WTC11 (cell line): ENCODE measurements at regions of chr5 and their contacts with region 1.

Region 1: DNA sequence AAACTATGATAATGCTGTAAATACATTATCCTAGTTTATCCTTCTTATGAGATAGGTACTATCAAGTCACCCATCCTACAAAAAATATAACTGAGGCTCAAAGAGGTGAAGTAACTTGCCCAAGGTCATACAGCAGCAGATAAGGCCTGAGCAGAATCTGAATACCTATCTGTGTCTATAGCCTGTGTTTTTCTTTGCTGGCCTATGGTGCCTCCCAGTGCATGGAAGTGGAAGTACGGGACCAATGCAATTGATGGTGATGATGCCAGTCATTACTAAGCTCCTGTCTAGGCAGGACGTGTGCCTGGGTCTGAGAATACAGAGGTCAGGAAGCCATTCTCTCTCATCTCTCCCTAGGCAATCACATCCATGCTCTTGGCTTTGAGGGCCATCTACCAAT is 67.8 kb downstream of the FAT2 start:
- DNase-seq: peak; percentile 62
- ATAC-seq: peak; percentile 97
- H3K4me3 Mint-ChIP-seq: no peak overlapping the region
- H3K27ac Mint-ChIP-seq: no peak overlapping the region
- H3K4me1 Mint-ChIP-seq: no peaks in the 10 kb centered on the region
- H3K27me3 Mint-ChIP-seq: no peaks in the 10 kb centered on the region
- CTCF ChIP-seq: peak; percentile 47; the same call in 1 of the 2 replicates

Region 2: DNA sequence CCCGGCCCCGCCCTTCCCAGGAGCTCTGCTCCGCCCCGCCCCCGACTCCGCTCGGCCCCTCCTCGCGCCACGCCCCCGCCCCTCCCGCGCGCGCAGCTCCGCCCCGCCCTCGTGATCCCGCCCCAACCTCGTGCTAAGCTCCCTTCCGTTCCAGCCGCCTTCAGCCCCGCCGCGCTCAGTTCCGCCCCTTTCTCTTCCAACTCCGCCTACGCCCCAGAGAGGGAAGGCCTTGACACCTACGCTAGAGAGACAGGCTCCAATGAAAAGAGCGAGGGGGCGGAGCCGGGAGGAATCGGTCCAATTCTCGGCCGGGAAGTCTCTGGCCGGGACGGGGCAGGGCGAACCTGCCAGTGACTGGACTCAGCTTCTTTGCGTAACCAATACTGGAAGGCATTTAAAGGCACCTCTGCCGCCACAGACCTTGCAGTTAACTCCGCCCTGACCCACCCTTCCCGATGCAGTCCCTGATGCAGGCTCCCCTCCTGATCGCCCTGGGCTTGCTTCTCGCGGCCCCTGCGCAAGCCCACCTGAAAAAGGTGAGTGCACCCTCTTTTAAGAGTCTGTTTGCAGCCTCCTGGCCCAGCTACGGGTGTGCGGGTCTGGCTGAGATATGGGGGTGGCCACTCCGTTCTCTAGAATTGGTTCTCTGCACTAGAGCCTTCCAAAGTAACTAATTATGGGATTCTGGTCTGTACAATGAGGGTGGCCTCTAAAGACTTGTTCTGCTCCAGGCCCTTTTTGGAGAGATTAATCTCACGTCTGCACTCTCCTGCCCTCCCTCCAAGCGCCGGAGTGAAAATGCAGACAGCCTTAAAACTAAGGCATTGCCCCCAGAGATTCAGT is 270.4 kb before region 1 on chr5 and contains the start of gene GM2A:
- CTCF ChIA-PET with region 1: interaction called, 12 read pairs
- POLR2A ChIA-PET with region 1: no interaction called
- DNase-seq: peak; percentile 100
- ATAC-seq: peak; percentile 96
- H3K4me3 Mint-ChIP-seq: peak within 1 kb of the TSS; percentile 90
- H3K27ac Mint-ChIP-seq: peak within 1 kb of the TSS; percentile 92
- H3K4me1 Mint-ChIP-seq: peaks cover 35% of the 10 kb centered on the region
- H3K27me3 Mint-ChIP-seq: peaks cover 6% of the 10 kb centered on the region
- CTCF ChIP-seq: no peak
- total RNA-seq, gene GM2A: 33.1 to 36.2 TPM (median 33.2 TPM) in 3 replicates

Region 3: DNA sequence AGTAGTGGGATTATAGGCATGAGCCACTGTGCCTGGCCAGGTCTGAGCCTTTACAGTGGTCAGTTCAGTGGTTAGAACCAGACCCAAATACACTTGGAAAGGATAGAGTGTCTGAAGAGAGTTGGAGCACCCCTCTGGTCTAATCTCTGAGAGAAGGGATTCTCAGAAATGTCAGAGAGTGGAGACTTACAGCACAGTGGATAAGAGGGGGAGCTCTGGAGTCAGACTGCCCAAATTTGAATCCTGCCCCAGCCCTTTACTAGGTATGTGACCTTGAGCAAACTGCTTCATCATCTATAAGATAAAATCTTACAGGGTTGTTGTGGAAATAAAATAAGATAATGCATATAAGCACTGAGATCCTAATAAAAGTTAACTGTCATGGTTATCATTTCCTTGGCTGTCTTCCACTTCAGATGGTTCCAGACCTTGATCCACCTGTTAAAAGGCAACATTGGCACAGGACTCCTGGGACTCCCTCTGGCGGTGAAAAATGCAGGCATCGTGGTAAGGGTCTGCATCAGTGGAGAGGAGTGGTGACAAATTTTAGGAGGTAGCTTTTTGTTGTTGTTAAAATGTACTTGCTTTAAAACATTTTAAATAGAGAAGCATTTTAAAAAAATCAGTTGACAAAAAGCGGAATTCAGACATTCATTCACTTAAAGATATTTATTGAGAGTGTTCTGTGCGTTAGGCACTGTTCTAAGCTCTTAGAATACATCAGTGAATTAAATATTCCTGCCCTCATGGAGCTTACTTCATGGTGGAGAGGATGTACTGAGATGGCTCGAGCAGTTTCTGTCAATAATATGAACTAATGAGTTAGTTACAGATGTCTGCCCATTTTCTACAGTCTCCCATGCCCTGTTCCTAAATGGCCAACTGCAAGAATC is 60.0 kb before region 1 on chr5:
- CTCF ChIA-PET with region 1: interaction called, 13 read pairs
- POLR2A ChIA-PET with region 1: no interaction called
- DNase-seq: peak; percentile 72
- ATAC-seq: peak; percentile 93
- H3K4me3 Mint-ChIP-seq: no peak overlapping the region
- H3K27ac Mint-ChIP-seq: no peak overlapping the region
- H3K4me1 Mint-ChIP-seq: no peaks in the 10 kb centered on the region
- H3K27me3 Mint-ChIP-seq: no peaks in the 10 kb centered on the region
- CTCF ChIP-seq: peak; percentile 66; the same call in 1 of the 2 replicates

Region 4: DNA sequence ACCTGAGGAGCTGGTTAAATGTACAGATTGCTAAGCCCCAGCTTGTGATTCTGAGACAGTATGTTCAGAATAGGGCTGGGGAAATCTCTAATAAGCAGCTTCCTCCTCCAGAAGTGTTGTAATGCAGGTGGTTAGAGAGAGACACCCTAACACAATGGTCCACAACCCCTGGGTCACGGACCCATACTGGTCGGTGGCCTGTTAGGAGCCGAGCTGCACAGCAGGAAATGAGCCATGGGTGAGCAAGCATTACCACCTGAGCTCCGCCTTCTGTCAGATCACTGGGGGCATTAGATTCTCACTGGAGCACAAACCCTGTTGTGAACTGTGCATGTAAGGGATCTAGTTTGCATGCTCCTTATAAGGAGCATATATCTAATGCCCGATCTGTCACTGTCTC is 14.1 kb before region 1 on chr5:
- CTCF ChIA-PET with region 1: interaction called, 10 read pairs
- POLR2A ChIA-PET with region 1: no interaction called
- DNase-seq: no peak
- ATAC-seq: no peak
- H3K4me3 Mint-ChIP-seq: no peak overlapping the region
- H3K27ac Mint-ChIP-seq: no peak overlapping the region
- H3K4me1 Mint-ChIP-seq: no peaks in the 10 kb centered on the region
- H3K27me3 Mint-ChIP-seq: no peaks in the 10 kb centered on the region
- CTCF ChIP-seq: no peak

Region 5: GRCh38 chr5:151619796-151620460 is 96.6 kb after region 1 on chr5:
- CTCF ChIA-PET with region 1: interaction called, 12 read pairs
- POLR2A ChIA-PET with region 1: no interaction called
- DNase-seq: peak; percentile 40
- ATAC-seq: peak; percentile 90
- H3K4me3 Mint-ChIP-seq: no peak overlapping the region
- H3K27ac Mint-ChIP-seq: no peak overlapping the region
- H3K4me1 Mint-ChIP-seq: peaks cover 38% of the 10 kb centered on the region
- H3K27me3 Mint-ChIP-seq: no peaks in the 10 kb centered on the region; the same call in 1 of the 2 replicates
- CTCF ChIP-seq: no peak